ENCODE measurements at regions of chr13 and their contacts with region 1.

Region 1: GRCh38 chr13:59483501-59484145 is 680.1 kb downstream of the DIAPH3 start:
- DNase-seq: peak in 3 of 5 donors; percentile 24 to 48 (median 34)
- ATAC-seq: peak; percentile 68 to 86 (median 79)
- H3K4me3 ChIP-seq: no peak overlapping the region
- H3K27ac ChIP-seq: peak overlapping the region in 9 of 12 donors; percentile 32 to 67 (median 47)
- H3K4me1 ChIP-seq: peaks cover 0 to 47% (median 15%) of the 10 kb centered on the region in 12 donors
- H3K27me3 ChIP-seq: no peaks in the 10 kb centered on the region
- CTCF ChIP-seq: no peak
- POLR2A ChIP-seq: no peak

Region 2: DNA sequence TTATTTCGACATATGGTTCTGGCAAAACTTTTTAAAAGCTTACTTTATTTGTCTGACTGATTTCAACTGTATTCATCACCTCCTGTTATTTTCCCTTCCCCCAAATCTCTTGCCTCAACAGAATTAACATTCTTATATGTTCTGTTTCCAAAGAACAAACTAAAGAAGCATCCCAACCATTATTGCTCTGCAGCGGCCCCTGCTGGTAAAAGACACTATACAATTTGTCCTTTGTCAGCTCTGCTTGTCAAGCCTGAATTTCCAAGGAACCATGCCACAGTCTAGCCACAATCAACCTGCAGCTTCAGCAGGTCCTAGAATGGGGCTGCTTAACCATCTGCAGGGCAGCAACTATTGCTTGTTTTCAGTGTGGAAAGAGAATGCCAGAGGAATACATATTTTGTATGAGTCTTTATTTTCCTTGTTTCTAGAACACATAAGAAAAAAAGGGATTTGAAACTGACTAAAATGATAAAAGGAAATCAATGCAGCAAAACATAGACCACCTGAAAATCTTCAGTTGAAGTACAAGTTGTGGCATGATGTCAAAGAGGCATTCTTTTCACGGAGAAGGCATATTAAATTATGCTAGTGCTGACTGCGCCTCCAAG is 165.2 kb before region 1 on chr13:
- intact Hi-C with region 1: loop called in 1 of 10 experiments (anchors 10 kb)
- DNase-seq: peak; percentile 69 to 79 (median 77)
- ATAC-seq: peak in 3 of 4 donors; percentile 56 to 68 (median 56)
- H3K4me3 ChIP-seq: no peak overlapping the region
- H3K27ac ChIP-seq: peak overlapping the region in 4 of 12 donors; percentile 6 to 47 (median 18)
- H3K4me1 ChIP-seq: peaks cover 0 to 15% (median 0%) of the 10 kb centered on the region in 12 donors
- H3K27me3 ChIP-seq: no peaks in the 10 kb centered on the region
- CTCF ChIP-seq: peak; percentile 63 to 88 (median 76)
- POLR2A ChIP-seq: no peak

Region 3: GRCh38 chr13:59666504-59666903 is 182.9 kb after region 1 on chr13:
- intact Hi-C with region 1: loop called in 2 of 10 experiments (anchors 5 to 10 kb)
- DNase-seq: no peak
- ATAC-seq: peak in 3 of 4 donors; percentile 53 to 88 (median 61)
- H3K4me3 ChIP-seq: no peak overlapping the region
- H3K27ac ChIP-seq: peak overlapping the region in 6 of 12 donors; percentile 12 to 59 (median 46)
- H3K4me1 ChIP-seq: peaks cover 0 to 26% (median 8%) of the 10 kb centered on the region in 12 donors
- H3K27me3 ChIP-seq: no peaks in the 10 kb centered on the region
- CTCF ChIP-seq: no peak
- POLR2A ChIP-seq: no peak